ENCODE measurements at regions of chrX and their contacts with region 1.

Region 1: DNA sequence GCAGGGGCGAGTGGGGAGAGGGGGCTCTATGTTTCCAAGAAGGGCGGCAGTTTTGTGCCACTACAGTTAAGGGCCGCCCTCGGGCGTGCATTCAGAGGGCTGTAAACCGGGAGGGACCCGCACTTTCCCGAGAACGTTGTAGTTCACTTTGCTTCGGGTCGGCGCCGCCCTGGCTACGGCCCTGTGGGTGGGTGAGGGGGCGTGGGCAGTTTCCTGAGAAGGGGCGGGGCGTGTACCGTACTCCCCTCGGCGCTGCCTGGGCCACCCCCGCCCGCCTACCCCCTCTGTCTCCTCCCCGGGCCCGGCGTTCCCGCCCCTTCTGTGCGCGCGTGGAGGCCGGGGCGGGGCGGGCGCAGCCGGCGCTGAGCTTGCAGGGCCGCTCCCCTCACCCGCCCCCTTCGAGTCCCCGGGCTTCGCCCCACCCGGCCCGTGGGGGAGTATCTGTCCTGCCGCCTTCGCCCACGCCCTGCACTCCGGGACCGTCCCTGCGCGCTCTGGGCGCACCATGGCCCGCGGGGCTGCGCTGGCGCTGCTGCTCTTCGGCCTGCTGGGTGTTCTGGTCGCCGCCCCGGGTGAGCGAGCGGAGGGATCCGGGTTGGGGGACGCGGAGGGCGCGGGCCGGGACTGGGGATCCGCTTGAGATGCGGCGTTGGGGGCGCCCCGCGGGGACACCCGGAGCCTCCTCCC is at the start of gene CD99:
- DNase-seq: peak; percentile 79 to 96 (median 89)
- ATAC-seq: peak; percentile 85
- H3K4me3 ChIP-seq: peak within 1 kb of the TSS; percentile 96
- H3K4me3 Mint-ChIP-seq: peak within 1 kb of the TSS; percentile 95
- H3K27ac ChIP-seq: peak within 1 kb of the TSS; percentile 61 to 62
- H3K27ac Mint-ChIP-seq: peak within 1 kb of the TSS; percentile 83
- H3K4me1 ChIP-seq: peaks cover 47% of the 10 kb centered on the region
- H3K4me1 Mint-ChIP-seq: peaks cover 40% of the 10 kb centered on the region
- H3K27me3 ChIP-seq: no peaks in the 10 kb centered on the region
- H3K27me3 Mint-ChIP-seq: no peaks in the 10 kb centered on the region
- CTCF ChIP-seq: no peak
- total RNA-seq, gene CD99: 170 to 184 TPM

Region 2: GRCh38 chrX:1468250-1468772 is 1222.7 kb before region 1 on chrX:
- CTCF ChIA-PET with region 1: no interaction called
- POLR2A ChIA-PET with region 1: no interaction called
- intact Hi-C with region 1: loop called in 1 of 2 experiments (anchors 10 kb)
- DNase-seq: peak; percentile 53 to 92 (median 71)
- ATAC-seq: peak; percentile 43
- H3K4me3 ChIP-seq: no peak overlapping the region
- H3K4me3 Mint-ChIP-seq: peak overlapping the region; percentile 57
- H3K27ac ChIP-seq: peak overlapping the region; percentile 77 to 79
- H3K27ac Mint-ChIP-seq: peak overlapping the region; percentile 94
- H3K4me1 ChIP-seq: peaks cover 97% of the 10 kb centered on the region
- H3K4me1 Mint-ChIP-seq: peaks cover 75% of the 10 kb centered on the region
- H3K27me3 ChIP-seq: no peaks in the 10 kb centered on the region
- H3K27me3 Mint-ChIP-seq: no peaks in the 10 kb centered on the region
- CTCF ChIP-seq: no peak

Region 3: GRCh38 chrX:2401590-2402360 is 289.2 kb before region 1 on chrX:
- CTCF ChIA-PET with region 1: no interaction called
- POLR2A ChIA-PET with region 1: no interaction called
- intact Hi-C with region 1: no loop called
- DNase-seq: no peak
- ATAC-seq: no peak
- H3K4me3 ChIP-seq: no peak overlapping the region
- H3K4me3 Mint-ChIP-seq: no peak overlapping the region
- H3K27ac ChIP-seq: no peak overlapping the region
- H3K27ac Mint-ChIP-seq: no peak overlapping the region
- H3K4me1 ChIP-seq: no peaks in the 10 kb centered on the region
- H3K4me1 Mint-ChIP-seq: no peaks in the 10 kb centered on the region
- H3K27me3 ChIP-seq: no peaks in the 10 kb centered on the region
- H3K27me3 Mint-ChIP-seq: no peaks in the 10 kb centered on the region
- CTCF ChIP-seq: no peak

Region 4: DNA sequence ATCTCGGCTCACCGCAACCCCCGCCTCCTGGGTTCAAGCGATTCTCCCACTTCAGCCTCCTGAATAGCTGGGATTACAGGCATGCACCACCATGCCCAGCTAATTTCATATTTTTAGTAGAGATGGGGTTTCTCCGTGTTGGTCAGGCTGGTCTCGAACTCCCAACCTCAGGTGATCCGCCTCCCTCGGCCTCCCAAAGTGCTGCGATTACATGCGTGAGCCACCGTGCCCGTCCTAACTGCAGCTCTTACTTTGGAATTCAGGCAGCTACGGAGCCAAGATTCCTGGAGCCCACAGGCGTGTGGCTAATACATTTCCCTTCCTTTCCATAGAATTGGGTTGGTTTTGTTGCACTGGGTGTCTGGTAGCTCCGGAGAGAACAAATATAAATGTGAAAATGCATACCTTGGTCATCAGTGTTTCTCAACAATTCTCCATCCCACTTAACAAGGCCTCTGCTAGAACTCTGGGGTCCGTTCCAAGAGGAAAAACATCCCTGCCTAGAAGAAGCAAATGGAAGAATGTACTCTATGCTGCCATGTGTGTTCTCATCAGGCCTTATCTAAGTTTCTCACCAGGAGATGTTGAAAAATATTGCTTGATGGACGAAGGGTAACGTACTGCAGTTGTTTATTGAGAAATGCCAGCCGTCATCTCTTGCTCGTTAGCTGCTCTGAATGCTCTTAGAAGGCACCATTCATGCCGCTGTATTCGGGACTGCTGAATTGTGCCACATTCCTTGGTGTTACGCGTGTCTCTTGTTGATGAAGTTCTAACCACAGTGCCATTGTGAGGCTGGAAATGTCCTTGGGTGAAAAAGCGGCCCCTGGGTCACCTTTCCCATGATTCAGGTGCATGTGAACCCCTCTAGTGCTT is 50.5 kb before region 1 on chrX:
- CTCF ChIA-PET with region 1: no interaction called
- POLR2A ChIA-PET with region 1: no interaction called
- intact Hi-C with region 1: loop called in 1 of 2 experiments (anchors 5 kb)
- DNase-seq: no peak
- ATAC-seq: no peak
- H3K4me3 ChIP-seq: no peak overlapping the region
- H3K4me3 Mint-ChIP-seq: no peak overlapping the region
- H3K27ac ChIP-seq: no peak overlapping the region
- H3K27ac Mint-ChIP-seq: no peak overlapping the region
- H3K4me1 ChIP-seq: no peaks in the 10 kb centered on the region
- H3K4me1 Mint-ChIP-seq: peaks cover 4% of the 10 kb centered on the region
- H3K27me3 ChIP-seq: no peaks in the 10 kb centered on the region
- H3K27me3 Mint-ChIP-seq: no peaks in the 10 kb centered on the region
- CTCF ChIP-seq: no peak

Region 5: DNA sequence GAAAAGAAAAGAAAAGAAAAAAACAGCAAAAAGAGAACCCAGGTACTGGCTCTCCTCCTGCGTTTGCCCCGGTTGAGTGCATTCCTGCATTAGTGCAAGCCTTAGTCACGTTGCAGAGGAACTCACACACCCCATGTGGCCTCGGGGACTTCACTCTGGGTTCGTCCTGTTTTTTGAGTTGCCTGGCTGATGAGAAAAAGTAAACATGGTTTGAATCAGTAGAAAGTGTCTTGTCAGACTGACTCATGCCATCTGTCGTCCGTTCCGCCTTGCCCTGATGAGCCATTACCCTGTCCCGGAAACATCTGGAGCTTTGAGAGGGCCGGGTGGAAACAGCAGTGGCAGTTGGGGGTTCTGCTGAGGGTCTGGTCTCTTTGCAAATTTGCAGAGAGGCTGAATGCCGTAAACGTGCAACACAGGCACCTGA is 16.3 kb after region 1 on chrX:
- CTCF ChIA-PET with region 1: no interaction called
- POLR2A ChIA-PET with region 1: no interaction called
- intact Hi-C with region 1: loop called (anchors 1 to 2 kb)
- DNase-seq: peak in 13 of 14 experiments; percentile 28 to 80 (median 46)
- ATAC-seq: peak; percentile 28
- H3K4me3 ChIP-seq: no peak overlapping the region
- H3K4me3 Mint-ChIP-seq: peak overlapping the region; percentile 20
- H3K27ac ChIP-seq: peak overlapping the region in 1 of 2 donors; percentile 24
- H3K27ac Mint-ChIP-seq: peak overlapping the region; percentile 85
- H3K4me1 ChIP-seq: peaks cover 78% of the 10 kb centered on the region
- H3K4me1 Mint-ChIP-seq: peaks cover 74% of the 10 kb centered on the region
- H3K27me3 ChIP-seq: no peaks in the 10 kb centered on the region
- H3K27me3 Mint-ChIP-seq: no peaks in the 10 kb centered on the region
- CTCF ChIP-seq: no peak

Region 6: GRCh38 chrX:2732076-2732475 is 41.1 kb after region 1 on chrX:
- CTCF ChIA-PET with region 1: no interaction called
- POLR2A ChIA-PET with region 1: no interaction called
- intact Hi-C with region 1: loop called (anchors 5 kb)
- DNase-seq: no peak
- ATAC-seq: no peak
- H3K4me3 ChIP-seq: no peak overlapping the region
- H3K4me3 Mint-ChIP-seq: no peak overlapping the region
- H3K27ac ChIP-seq: no peak overlapping the region
- H3K27ac Mint-ChIP-seq: no peak overlapping the region
- H3K4me1 ChIP-seq: no peaks in the 10 kb centered on the region
- H3K4me1 Mint-ChIP-seq: no peaks in the 10 kb centered on the region
- H3K27me3 ChIP-seq: no peaks in the 10 kb centered on the region
- H3K27me3 Mint-ChIP-seq: no peaks in the 10 kb centered on the region
- CTCF ChIP-seq: no peak